CD8-positive, alpha-beta memory T cell (primary cell): ENCODE measurements at regions of chr13 and their contacts with region 1.

Region 1: DNA sequence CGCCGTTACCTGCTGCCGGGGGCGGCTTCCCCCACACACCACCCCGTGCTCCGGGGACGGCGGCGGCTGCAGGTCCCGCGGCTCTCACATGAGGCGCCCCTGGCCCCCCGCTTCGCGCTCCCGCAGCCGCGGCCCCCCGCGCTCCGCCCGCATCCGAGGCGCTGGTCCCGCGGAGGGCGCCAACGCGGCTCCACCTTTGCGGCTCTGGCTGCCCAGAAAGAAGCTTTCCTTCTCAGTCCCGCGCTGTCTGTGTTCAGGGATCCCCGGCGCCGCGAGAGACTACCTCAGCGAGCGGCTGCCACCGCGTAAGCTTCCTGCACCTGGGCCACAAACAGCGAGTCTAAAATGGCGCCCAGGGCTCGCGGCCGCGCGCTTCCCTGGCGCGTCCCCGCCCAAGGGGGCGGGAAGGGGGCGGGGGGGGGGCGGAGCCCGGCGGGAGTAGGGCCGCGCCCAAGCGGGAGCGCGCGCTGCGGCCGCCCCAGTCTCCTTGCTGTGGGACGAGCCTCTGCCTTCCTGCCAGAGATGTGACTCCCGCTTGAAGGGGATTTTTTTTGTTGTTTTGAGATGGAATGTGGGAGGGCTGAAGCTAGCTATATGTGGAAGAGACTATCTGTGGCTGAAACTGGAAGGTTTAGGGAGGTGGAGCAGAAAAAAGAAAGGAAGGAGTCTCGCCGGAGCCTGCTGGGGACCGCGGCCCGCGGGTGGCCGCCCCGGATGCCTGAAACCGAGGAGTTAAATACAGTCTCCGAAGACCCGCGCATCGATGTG is at the start of gene FBXL3:
- DNase-seq: peak; percentile 73 to 90 (median 83)
- H3K4me3 ChIP-seq: peak within 1 kb of the TSS; percentile 92
- H3K4me3 Mint-ChIP-seq: peak within 1 kb of the TSS; percentile 95 to 99 (median 98)
- H3K27ac ChIP-seq: peak within 1 kb of the TSS; percentile 92
- H3K27ac Mint-ChIP-seq: peak within 1 kb of the TSS; percentile 93 to 99 (median 97)
- H3K4me1 ChIP-seq: peaks cover 49% of the 10 kb centered on the region
- H3K4me1 Mint-ChIP-seq: peaks cover 50 to 59% (median 59%) of the 10 kb centered on the region in 3 donors
- H3K27me3 ChIP-seq: no peaks in the 10 kb centered on the region
- H3K27me3 Mint-ChIP-seq: peaks cover 7 to 11% of the 10 kb centered on the region in 2 donors
- total RNA-seq, gene FBXL3: 41.7 to 45.0 TPM

Region 2: DNA sequence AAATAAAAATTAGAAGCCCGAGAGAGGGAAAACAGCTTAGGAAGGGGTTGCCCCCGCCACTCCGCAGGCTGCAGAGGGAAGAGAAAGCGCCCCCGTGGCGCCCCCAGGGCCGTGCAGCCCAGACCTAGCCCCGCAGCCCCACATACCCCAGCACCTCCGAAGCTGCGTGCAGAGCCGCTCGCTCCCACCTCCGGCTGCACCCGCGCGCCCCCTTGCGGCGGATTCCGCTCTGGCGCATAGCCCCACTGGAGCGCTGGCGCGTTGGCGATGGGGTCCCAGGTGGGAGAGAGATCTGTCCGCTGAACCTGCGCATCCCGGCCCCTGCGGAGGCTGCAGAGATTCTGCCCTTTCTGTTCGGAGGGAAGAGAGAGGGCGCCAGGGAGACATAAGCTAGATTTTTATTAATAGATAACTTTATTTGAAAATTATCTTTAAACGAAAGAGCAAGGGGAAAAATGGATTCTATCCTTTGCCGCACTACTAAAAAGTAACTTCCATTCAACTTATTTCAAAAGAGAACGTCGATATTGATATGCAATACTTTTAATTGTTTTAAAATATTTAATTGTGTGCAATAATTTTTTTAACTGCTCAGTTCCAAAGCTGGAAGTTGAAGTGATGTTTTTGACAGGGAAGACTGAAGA is 46.8 kb before region 1 on chr13:
- CTCF ChIA-PET with region 1: interaction called, 14 read pairs
- POLR2A ChIA-PET with region 1: interaction called, 3 read pairs
- DNase-seq: peak; percentile 75 to 87 (median 83)
- H3K4me3 ChIP-seq: no peak overlapping the region
- H3K4me3 Mint-ChIP-seq: peak overlapping the region in 3 of 7 donors; percentile 13 to 44 (median 34)
- H3K27ac ChIP-seq: no peak overlapping the region
- H3K27ac Mint-ChIP-seq: no peak overlapping the region
- H3K4me1 ChIP-seq: no peaks in the 10 kb centered on the region
- H3K4me1 Mint-ChIP-seq: peaks cover 5 to 21% (median 14%) of the 10 kb centered on the region in 3 donors
- H3K27me3 ChIP-seq: peaks cover 10% of the 10 kb centered on the region
- H3K27me3 Mint-ChIP-seq: peaks cover 20 to 60% of the 10 kb centered on the region in 2 donors

Region 3: GRCh38 chr13:76991796-76992547 is 35.0 kb before region 1 on chr13 and contains the start of gene CLN5:
- CTCF ChIA-PET with region 1: interaction called, 27 read pairs
- POLR2A ChIA-PET with region 1: interaction called, 95 read pairs
- DNase-seq: peak; percentile 93 to 97 (median 96)
- H3K4me3 ChIP-seq: peak within 1 kb of the TSS; percentile 91
- H3K4me3 Mint-ChIP-seq: peak within 1 kb of the TSS; percentile 90 to 98 (median 95)
- H3K27ac ChIP-seq: peak within 1 kb of the TSS; percentile 96
- H3K27ac Mint-ChIP-seq: peak within 1 kb of the TSS; percentile 98 to 100 (median 100)
- H3K4me1 ChIP-seq: peaks cover 31% of the 10 kb centered on the region
- H3K4me1 Mint-ChIP-seq: peaks cover 40 to 57% (median 44%) of the 10 kb centered on the region in 3 donors
- H3K27me3 ChIP-seq: peaks cover 14% of the 10 kb centered on the region
- H3K27me3 Mint-ChIP-seq: peaks cover 12 to 15% of the 10 kb centered on the region in 2 donors
- total RNA-seq, gene CLN5: 14.0 to 15.9 TPM

Region 4: GRCh38 chr13:77329133-77329910 is 302.3 kb after region 1 on chr13:
- CTCF ChIA-PET with region 1: interaction called, 6 read pairs
- POLR2A ChIA-PET with region 1: interaction called, 10 read pairs
- DNase-seq: peak; percentile 81 to 95 (median 92)
- H3K4me3 ChIP-seq: peak overlapping the region; percentile 74
- H3K4me3 Mint-ChIP-seq: peak overlapping the region; percentile 88 to 99 (median 94)
- H3K27ac ChIP-seq: peak overlapping the region; percentile 69
- H3K27ac Mint-ChIP-seq: peak overlapping the region; percentile 92 to 99 (median 95)
- H3K4me1 ChIP-seq: peaks cover 32% of the 10 kb centered on the region
- H3K4me1 Mint-ChIP-seq: peaks cover 46 to 57% (median 51%) of the 10 kb centered on the region in 3 donors
- H3K27me3 ChIP-seq: no peaks in the 10 kb centered on the region
- H3K27me3 Mint-ChIP-seq: peaks cover 0 to 3% of the 10 kb centered on the region in 2 donors